ENCODE measurements at regions of chr10 and their contacts with region 1.

Region 1: GRCh38 chr10:103451831-103452505 is at the start of gene CALHM2:
- DNase-seq: peak; percentile 71
- H3K4me3 Mint-ChIP-seq: peak within 1 kb of the TSS; percentile 96
- H3K27ac Mint-ChIP-seq: peak within 1 kb of the TSS; percentile 95
- H3K4me1 Mint-ChIP-seq: peaks cover 64% of the 10 kb centered on the region
- H3K27me3 Mint-ChIP-seq: no peaks in the 10 kb centered on the region
- total RNA-seq, gene CALHM2: 135 to 138 TPM

Region 2: GRCh38 chr10:103416436-103417147 is 35.4 kb before region 1 on chr10:
- CTCF ChIA-PET with region 1: interaction called, 6 read pairs
- POLR2A ChIA-PET with region 1: interaction called, 12 read pairs
- DNase-seq: peak; percentile 77
- H3K4me3 Mint-ChIP-seq: no peak overlapping the region
- H3K27ac Mint-ChIP-seq: no peak overlapping the region
- H3K4me1 Mint-ChIP-seq: peaks cover 1% of the 10 kb centered on the region
- H3K27me3 Mint-ChIP-seq: no peaks in the 10 kb centered on the region

Region 3: DNA sequence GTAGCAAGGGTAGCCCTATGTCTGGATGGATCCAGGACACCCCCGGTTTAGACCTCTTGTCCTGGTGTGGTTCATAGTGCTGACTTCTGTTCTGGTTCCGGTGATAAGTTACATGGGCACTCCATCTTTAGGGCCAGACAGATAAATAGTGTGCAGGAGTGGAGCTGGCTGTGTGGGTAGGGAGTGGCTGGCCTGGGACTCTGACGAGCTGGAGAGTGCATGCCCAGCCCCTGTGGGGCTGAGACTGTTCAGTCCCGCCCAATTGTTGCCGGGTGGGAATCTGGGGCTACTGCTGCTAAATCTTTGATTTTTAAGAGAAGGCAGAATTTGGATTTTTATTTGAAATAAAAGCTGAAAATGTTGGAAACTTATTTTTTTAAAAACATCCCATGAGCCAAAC is 28.2 kb before region 1 on chr10:
- CTCF ChIA-PET with region 1: interaction called, 3 read pairs
- POLR2A ChIA-PET with region 1: interaction called, 10 read pairs
- DNase-seq: no peak
- H3K4me3 Mint-ChIP-seq: no peak overlapping the region
- H3K27ac Mint-ChIP-seq: peak overlapping the region; percentile 11
- H3K4me1 Mint-ChIP-seq: peaks cover 22% of the 10 kb centered on the region
- H3K27me3 Mint-ChIP-seq: no peaks in the 10 kb centered on the region

Region 4: GRCh38 chr10:103470761-103471653 is 19.0 kb after region 1 on chr10:
- CTCF ChIA-PET with region 1: interaction called, 34 read pairs
- POLR2A ChIA-PET with region 1: interaction called, 87 read pairs
- DNase-seq: peak; percentile 92
- H3K4me3 Mint-ChIP-seq: peak overlapping the region; percentile 66
- H3K27ac Mint-ChIP-seq: peak overlapping the region; percentile 99
- H3K4me1 Mint-ChIP-seq: peaks cover 76% of the 10 kb centered on the region
- H3K27me3 Mint-ChIP-seq: no peaks in the 10 kb centered on the region

Region 5: DNA sequence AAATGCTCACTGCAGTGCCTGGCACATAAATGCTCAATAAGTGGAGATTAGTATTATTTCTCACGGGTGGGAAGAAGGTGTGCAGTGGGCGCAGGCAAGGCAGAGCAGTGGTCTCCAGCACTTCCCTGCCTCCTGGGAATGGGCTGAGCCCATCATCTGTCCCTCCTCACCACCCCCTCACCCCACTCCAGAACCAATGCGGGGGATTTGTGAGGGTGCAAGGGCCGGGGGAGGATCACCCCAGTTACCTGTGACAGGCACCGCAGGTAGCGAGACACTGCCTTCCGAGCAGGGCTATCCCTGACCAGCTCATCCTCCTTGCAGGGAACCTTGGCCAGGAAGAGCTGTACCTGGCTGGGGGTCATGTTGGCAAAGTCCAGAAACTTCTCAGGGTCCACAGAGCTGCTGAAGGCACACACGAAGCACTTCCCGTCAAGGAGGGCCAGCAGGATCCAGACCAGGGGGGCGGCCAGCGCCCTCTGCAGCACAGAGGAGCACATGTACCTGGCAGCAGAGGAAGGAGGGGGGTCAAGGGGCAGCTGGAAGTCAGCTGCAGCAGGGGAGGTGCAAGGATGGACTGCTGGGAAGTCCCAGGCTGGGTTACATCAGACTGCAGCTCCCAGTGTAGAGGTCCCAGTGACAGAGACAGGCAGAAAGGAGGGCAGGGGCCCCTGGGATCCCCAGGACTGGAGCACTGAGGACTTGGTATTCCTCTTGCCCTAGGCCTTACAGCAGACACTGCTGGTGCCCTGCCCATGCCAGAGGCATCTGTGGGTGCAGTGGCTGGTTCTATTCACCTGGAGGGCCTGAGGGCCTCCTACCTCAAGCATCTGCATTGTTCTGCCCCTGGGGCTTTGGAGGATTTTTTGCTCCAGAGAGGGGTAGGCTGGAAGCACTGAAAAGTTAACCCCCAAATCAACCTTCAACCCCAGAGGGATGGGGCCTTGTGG is 24.4 kb after region 1 on chr10:
- CTCF ChIA-PET with region 1: interaction called, 34 read pairs
- POLR2A ChIA-PET with region 1: interaction called, 87 read pairs
- DNase-seq: peak; percentile 46
- H3K4me3 Mint-ChIP-seq: no peak overlapping the region
- H3K27ac Mint-ChIP-seq: peak overlapping the region; percentile 42
- H3K4me1 Mint-ChIP-seq: peaks cover 65% of the 10 kb centered on the region
- H3K27me3 Mint-ChIP-seq: no peaks in the 10 kb centered on the region

Region 6: DNA sequence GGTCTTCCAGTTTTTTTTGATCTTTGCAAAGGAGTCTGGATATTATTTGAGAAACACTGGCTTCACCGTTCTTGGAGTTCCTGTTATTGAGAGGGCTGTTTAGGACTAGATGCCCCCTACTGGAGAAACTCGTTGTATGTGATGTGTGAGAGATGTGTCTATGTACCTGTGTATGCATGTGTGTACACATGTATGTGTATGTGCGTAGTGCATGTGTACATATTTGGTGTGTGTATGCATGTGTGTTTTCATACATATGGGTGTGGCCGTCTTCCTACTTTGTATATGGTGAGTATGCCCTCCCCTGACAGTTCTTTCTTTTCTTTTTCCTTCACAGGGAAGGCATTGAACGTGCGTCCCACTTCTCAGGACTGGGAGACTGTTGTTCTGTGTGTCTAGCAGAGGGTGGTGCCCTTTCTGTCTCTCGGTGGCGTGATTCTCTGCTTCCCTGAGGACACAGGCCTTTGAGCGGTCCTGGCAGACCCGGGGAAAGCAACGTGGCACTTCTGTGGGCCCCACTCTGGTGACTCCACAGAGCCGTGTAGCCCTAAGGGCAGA is 30.1 kb after region 1 on chr10:
- CTCF ChIA-PET with region 1: interaction called, 34 read pairs
- POLR2A ChIA-PET with region 1: interaction called, 27 read pairs
- DNase-seq: peak; percentile 38
- H3K4me3 Mint-ChIP-seq: no peak overlapping the region
- H3K27ac Mint-ChIP-seq: no peak overlapping the region
- H3K4me1 Mint-ChIP-seq: peaks cover 36% of the 10 kb centered on the region
- H3K27me3 Mint-ChIP-seq: peaks cover 3% of the 10 kb centered on the region

Measured in activated CD4-positive, alpha-beta memory T cell treated with anti-CD3 and anti-CD28 coated beads, Interleukin-2, amount 10 ng/mL, durations not matched to agents 7 days and 5 days (primary cell).